Ascending aorta (tissue), 2 donors: ENCODE measurements at regions of chr22 and their contacts with region 1.

Region 1: GRCh38 chr22:27670701-27671412 is 130.7 kb downstream of the MN1 start:
- DNase-seq: no peak
- H3K4me3 ChIP-seq: no peak overlapping the region
- H3K27ac ChIP-seq: no peak overlapping the region
- H3K4me1 ChIP-seq: peaks cover 5 to 25% of the 10 kb centered on the region in 2 donors
- H3K27me3 ChIP-seq: no peaks in the 10 kb centered on the region
- CTCF ChIP-seq: no peak

Region 2: GRCh38 chr22:27546157-27546935 is 124.5 kb before region 1 on chr22:
- intact Hi-C with region 1: no loop called
- DNase-seq: no peak
- H3K4me3 ChIP-seq: no peak overlapping the region
- H3K27ac ChIP-seq: no peak overlapping the region
- H3K4me1 ChIP-seq: no peaks in the 10 kb centered on the region
- H3K27me3 ChIP-seq: no peaks in the 10 kb centered on the region
- CTCF ChIP-seq: no peak

Region 3: DNA sequence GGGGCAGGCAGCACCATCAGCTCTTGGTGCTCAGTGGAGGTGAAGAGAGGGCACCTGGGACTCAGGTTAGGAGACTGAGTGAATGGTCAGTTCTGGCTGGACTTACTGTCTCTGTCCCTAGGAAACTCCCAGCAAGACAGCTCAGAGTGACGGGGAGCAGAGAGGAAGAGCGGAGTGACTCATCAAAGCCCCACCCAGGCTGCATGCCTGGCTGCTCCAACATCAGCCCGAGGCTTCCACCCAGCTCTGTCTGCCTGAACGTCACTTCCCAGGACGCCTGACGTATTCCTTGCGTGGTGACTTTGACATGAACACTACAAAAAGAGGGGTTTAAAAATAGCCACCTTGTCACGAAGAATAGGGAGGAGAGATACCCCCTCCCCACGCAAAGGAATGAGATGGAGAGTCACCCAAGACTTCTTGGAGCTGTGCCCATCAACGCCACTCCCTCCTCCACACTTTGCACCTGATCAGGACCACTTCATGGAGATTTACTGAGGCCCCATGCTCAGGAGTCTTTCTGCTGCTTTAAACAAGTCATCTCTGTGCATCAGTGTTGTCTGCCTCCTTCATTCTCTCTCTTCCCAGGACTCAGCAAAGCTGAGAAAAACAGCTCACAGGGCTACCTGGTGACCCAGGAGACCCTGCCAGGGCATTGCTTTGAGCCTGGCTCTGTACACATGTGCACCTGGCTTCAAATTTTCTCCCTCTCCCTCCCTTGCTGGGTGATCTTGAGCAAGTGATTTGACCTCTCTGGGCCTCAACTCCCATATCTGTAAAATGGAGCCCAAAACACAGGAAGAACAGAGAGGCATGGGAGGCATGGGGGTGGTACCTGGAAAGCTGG is 47.6 kb after region 1 on chr22:
- intact Hi-C with region 1: loop called (anchors 5 kb)
- DNase-seq: peak; percentile 51 to 89
- H3K4me3 ChIP-seq: no peak overlapping the region
- H3K27ac ChIP-seq: peak overlapping the region in 1 of 2 donors; percentile 46
- H3K4me1 ChIP-seq: peaks cover 2 to 3% of the 10 kb centered on the region in 2 donors
- H3K27me3 ChIP-seq: no peaks in the 10 kb centered on the region
- CTCF ChIP-seq: no peak